Ascending aorta (tissue), 2 donors: ENCODE measurements at regions of chr11 and their contacts with region 1.

Region 1: GRCh38 chr11:36312611-36313472 is 16.8 kb downstream of the PRR5L start:
- DNase-seq: no peak
- H3K4me3 ChIP-seq: no peak overlapping the region
- H3K27ac ChIP-seq: no peak overlapping the region
- H3K4me1 ChIP-seq: no peaks in the 10 kb centered on the region
- H3K27me3 ChIP-seq: no peaks in the 10 kb centered on the region
- CTCF ChIP-seq: no peak

Region 2: DNA sequence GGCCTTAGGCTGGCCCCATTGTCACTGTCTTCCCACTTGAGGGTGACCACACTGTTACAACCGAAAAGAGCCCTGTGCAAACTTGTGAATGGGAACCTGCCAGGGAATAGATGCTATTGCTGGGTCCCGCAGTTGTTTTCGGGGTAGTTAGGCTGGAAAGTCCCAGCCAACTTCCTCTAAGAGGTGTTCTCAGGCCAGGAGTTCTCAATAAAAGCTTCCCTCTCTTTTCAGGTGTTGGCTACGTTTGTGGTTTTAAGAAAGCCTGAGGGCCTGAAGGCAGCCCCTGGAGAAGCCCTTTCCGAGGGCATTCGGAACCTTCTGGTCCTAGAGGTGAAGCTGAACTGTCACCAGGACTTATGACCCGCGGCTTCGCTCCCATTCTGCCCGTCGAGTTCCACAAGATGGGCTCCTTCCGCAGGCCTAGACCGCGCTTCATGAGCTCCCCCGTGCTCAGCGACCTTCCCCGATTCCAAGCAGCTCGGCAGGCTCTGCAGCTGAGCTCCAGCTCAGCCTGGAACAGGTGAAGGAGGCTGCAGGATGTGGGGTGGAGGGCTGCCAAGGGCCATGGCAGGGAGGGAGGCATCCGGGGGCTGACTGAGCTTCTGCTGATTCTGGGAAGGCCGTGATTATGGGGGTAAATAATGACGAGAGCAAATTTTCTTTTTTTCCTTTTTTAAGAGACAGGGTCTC is 88.1 kb after region 1 on chr11:
- intact Hi-C with region 1: loop called (anchors 5 kb)
- DNase-seq: no peak
- H3K4me3 ChIP-seq: no peak overlapping the region
- H3K27ac ChIP-seq: no peak overlapping the region
- H3K4me1 ChIP-seq: no peaks in the 10 kb centered on the region
- H3K27me3 ChIP-seq: no peaks in the 10 kb centered on the region
- CTCF ChIP-seq: no peak